Vagina (tissue), 2 donors: ENCODE measurements at regions of chr15 and their contacts with region 1.

Region 1: DNA sequence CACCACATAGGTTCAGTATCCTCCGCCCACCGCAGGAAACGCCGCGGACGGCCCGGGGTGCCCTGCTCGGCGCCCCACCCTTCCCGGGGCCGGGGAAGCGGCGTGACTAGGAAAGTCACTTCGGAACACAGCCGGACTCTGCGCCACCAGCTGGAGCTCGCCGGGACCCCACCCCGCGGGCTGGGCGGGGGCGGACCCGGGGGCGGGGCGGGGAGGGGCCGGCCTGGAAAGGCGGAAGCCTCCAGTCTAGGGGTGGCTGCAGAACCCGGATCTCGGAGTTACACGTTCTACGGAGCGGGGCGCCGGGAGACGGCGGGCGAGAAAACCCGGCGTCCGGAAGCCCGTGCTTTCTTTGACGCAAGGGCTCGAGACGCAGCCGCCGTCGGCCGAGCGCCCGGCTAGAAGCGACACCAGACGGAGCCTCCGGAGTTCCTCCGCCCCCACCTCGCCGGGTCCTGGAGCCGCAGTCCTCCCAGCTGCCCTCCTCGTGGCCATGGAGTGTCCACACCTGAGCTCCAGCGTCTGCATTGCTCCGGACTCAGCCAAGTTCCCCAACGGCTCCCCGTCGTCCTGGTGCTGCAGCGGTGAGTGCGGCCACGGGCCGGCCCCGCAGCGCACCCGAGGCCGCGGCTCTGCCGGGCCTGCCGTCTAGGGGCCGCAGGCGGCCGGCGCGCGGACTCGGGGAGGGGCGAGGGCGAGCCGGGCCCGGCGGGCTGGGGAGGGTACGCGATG is at the start of gene USP3:
- DNase-seq: no peak
- H3K4me3 ChIP-seq: peak within 1 kb of the TSS; percentile 82 to 92
- H3K27ac ChIP-seq: peak within 1 kb of the TSS; percentile 97
- H3K4me1 ChIP-seq: peaks cover 74% of the 10 kb centered on the region
- H3K27me3 ChIP-seq: no peaks in the 10 kb centered on the region
- CTCF ChIP-seq: no peak
- POLR2A ChIP-seq: peak in 1 of 2 donors; percentile 74
- total RNA-seq, gene USP3: 39.5 TPM

Region 2: GRCh38 chr15:63414474-63415120 is 89.8 kb before region 1 on chr15:
- intact Hi-C with region 1: no loop called
- DNase-seq: no peak
- H3K4me3 ChIP-seq: no peak overlapping the region
- H3K27ac ChIP-seq: no peak overlapping the region
- H3K4me1 ChIP-seq: no peaks in the 10 kb centered on the region
- H3K27me3 ChIP-seq: no peaks in the 10 kb centered on the region
- CTCF ChIP-seq: no peak
- POLR2A ChIP-seq: no peak

Region 3: GRCh38 chr15:63605816-63606215 is 101.4 kb after region 1 on chr15:
- intact Hi-C with region 1: no loop called
- DNase-seq: no peak
- H3K4me3 ChIP-seq: no peak overlapping the region
- H3K27ac ChIP-seq: no peak overlapping the region
- H3K4me1 ChIP-seq: peaks cover 33% of the 10 kb centered on the region
- H3K27me3 ChIP-seq: no peaks in the 10 kb centered on the region
- CTCF ChIP-seq: no peak
- POLR2A ChIP-seq: no peak

Region 4: GRCh38 chr15:64460206-64460734 is 955.9 kb after region 1 on chr15 and contains the start of gene ZNF609:
- intact Hi-C with region 1: loop called (anchors 5 kb)
- DNase-seq: peak in 1 of 2 donors; percentile 91
- H3K4me3 ChIP-seq: peak within 1 kb of the TSS; percentile 58 to 75
- H3K27ac ChIP-seq: peak within 1 kb of the TSS; percentile 93
- H3K4me1 ChIP-seq: peaks cover 56% of the 10 kb centered on the region
- H3K27me3 ChIP-seq: no peaks in the 10 kb centered on the region
- CTCF ChIP-seq: peak in 1 of 3 experiments; percentile 37
- POLR2A ChIP-seq: peak in 1 of 2 donors; percentile 89
- total RNA-seq, gene ZNF609: 33.1 TPM